A549 (cell line): ENCODE measurements at regions of chr20 and their contacts with region 1.

Region 1: DNA sequence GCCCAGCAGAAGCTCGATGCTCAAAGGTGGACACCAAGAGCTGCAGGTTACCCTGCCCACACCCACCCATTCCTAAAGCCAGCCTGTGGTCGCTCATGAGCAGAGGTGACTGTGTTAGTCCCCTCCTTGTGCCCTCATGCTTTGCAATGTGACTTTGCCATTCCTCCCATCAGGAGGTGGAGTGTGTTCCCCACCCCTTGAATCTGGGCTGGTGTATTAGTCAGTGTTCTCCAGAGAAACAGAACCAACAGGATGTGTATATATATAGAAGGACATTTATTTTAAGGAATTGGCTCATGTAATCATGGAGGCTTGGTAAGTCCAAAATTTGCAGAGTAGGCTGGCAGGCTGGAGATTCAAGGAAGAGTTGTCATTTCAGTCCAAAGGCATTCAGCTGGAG is 54.4 kb upstream of the RNF24 start:
- DNase-seq: no peak
- ATAC-seq: no peak
- H3K4me3 ChIP-seq: no peak overlapping the region
- H3K27ac ChIP-seq: no peak overlapping the region
- H3K4me1 ChIP-seq: peaks cover 15% of the 10 kb centered on the region
- CTCF ChIP-seq: no peak
- EP300 ChIP-seq: no peak
- POLR2A ChIP-seq: no peak
- RAD21 ChIP-seq: no peak

Region 2: DNA sequence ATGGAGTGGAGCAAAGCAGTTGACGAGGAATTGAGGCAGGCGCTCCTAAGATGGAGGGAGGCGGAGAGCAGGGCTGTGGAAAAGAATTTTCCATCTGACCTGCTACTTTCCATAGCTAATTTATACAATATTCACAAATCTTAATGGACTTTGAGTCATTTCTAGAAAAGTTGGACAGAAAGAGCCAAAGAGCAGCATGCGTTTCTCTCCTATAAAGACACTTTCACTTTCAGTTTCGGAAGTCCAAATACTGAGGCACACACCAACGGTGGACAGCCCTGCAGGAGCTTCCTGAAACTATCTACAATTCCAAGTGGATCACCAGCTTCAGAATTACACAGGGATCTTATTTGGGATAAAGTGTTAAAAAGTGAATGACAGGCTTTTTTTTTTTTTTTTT is 137.1 kb before region 1 on chr20:
- CTCF ChIA-PET with region 1: interaction called, 14 read pairs
- POLR2A ChIA-PET with region 1: no interaction called
- DNase-seq: no peak
- ATAC-seq: no peak
- H3K4me3 ChIP-seq: no peak overlapping the region
- H3K27ac ChIP-seq: peak overlapping the region; percentile 14 to 26; a peak in 2 of 6 replicates
- H3K4me1 ChIP-seq: peaks cover 6% of the 10 kb centered on the region; the same call in 2 of the 3 replicates
- CTCF ChIP-seq: no peak
- EP300 ChIP-seq: no peak
- POLR2A ChIP-seq: no peak
- RAD21 ChIP-seq: no peak

Region 3: GRCh38 chr20:4045741-4046140 is 24.0 kb before region 1 on chr20:
- CTCF ChIA-PET with region 1: interaction called, 31 read pairs
- POLR2A ChIA-PET with region 1: interaction called, 3 read pairs
- DNase-seq: no peak
- ATAC-seq: no peak; a peak in 1 of 6 replicates
- H3K4me3 ChIP-seq: no peak overlapping the region
- H3K27ac ChIP-seq: no peak overlapping the region
- H3K4me1 ChIP-seq: peaks cover 14% of the 10 kb centered on the region
- CTCF ChIP-seq: no peak
- EP300 ChIP-seq: no peak
- POLR2A ChIP-seq: no peak
- RAD21 ChIP-seq: no peak

Region 4: GRCh38 chr20:4053071-4053919 is 16.5 kb before region 1 on chr20:
- CTCF ChIA-PET with region 1: interaction called, 31 read pairs
- POLR2A ChIA-PET with region 1: no interaction called
- DNase-seq: no peak
- ATAC-seq: 0 out of 6 replicates have a peak, but pooled peaks of 1 of the 2 experiments have one; percentile 27
- H3K4me3 ChIP-seq: no peak overlapping the region
- H3K27ac ChIP-seq: no peak overlapping the region
- H3K4me1 ChIP-seq: no peaks in the 10 kb centered on the region
- CTCF ChIP-seq: no peak
- EP300 ChIP-seq: no peak
- POLR2A ChIP-seq: no peak
- RAD21 ChIP-seq: no peak